ENCODE measurements at regions of chr4 and their contacts with region 1.

Region 1: DNA sequence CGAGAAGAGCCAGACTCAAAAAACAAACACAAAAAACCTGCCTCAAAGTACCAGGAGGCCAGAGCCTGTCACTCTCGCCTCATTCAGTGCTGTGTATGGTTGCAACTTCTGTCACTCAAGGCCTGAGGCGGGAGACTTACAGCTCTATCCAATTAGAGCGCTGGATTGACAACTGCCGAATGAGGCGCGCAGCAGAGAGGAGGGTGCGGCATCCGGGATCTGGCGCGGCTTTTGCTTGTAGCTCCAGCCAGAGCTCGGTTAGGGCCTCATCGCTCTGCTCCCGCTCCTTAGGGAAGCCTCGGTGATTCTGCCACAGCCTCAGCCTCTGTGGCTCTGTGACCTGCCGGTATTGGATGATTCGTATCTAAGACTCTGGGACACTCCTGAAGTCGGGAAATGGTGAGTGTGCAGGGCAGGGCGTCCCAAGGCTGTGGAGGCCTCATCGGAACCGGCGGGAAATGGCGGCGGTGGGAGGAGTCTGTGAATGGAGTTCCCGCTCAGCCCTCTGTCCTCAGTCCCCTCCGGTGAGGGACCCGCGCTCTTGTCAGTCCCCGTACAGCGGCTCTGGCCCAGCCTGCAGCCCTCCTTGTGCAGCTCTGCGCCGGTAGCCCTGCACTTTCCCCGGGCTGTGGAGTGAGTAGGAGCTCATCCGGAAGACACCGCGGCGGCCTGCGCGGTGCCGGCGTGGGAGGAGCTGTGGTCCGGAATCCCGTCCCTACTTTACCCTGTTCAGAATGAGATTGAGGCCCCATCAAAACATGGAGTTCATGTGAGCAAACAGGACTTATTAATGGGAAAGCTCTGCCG is at the start of gene ZNF718:
- DNase-seq: peak; percentile 94
- ATAC-seq: peak; percentile 98
- H3K4me3 Mint-ChIP-seq: peak within 1 kb of the TSS; percentile 95
- H3K27ac Mint-ChIP-seq: peak within 1 kb of the TSS; percentile 97
- H3K4me1 Mint-ChIP-seq: peaks cover 38% of the 10 kb centered on the region
- H3K27me3 Mint-ChIP-seq: no peaks in the 10 kb centered on the region
- total RNA-seq, gene ZNF718: 11.5 to 12.4 TPM

Region 2: GRCh38 chr4:85951-86350 is 38.5 kb before region 1 on chr4:
- CTCF ChIA-PET with region 1: no interaction called
- POLR2A ChIA-PET with region 1: no interaction called
- DNase-seq: no peak
- ATAC-seq: no peak
- H3K4me3 Mint-ChIP-seq: no peak overlapping the region
- H3K27ac Mint-ChIP-seq: no peak overlapping the region
- H3K4me1 Mint-ChIP-seq: no peaks in the 10 kb centered on the region
- H3K27me3 Mint-ChIP-seq: no peaks in the 10 kb centered on the region

Region 3: DNA sequence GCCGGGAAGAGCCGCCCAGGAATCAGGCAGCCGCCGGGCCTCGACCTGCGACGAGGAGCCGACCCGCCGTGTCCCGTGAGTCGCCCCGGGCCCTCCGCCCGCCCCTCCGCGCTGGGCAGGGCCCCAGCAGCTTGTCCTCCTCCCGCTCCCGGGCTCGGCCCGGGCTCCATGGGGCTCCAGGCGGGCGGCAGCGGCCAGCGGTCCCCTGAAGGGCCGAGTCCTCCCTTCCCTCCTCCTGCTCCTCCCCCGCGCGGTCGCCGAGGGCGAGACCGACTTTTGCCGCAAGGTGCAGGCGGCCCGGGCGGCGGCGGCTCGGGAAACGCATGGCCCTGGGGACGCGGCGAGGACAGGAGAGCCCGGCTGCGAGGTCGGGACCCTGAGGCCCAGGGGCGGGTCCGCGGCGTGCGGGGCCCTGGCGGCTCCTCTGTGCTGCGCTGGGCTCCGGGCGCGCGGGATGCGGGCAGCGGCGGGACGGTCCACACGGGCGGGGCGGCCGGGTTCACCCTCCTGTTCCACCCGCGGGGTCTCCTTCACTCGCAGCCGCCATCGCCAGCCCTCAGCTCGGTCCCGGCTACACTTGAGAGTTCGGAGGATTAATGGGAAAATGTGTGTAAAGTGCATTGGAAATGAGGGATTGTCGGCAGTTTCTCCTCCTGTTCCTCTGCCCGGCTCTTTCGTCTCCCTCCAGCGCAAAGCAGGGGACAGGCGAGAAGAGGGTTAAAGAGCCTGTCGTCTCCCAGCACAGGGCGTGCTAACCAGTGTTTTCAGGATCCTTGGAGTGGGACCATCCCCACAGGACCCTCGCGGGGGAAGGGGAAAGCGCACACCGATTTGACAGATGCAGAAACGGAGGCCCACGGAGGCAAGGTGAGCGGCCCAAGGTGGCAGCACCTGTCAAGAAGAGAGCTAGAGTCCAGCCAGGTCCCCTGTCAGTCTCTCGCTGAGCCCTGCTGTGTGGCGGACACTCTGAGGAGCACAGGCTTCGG is 16.7 kb before region 1 on chr4:
- CTCF ChIA-PET with region 1: no interaction called
- POLR2A ChIA-PET with region 1: no interaction called
- DNase-seq: no peak
- ATAC-seq: no peak
- H3K4me3 Mint-ChIP-seq: no peak overlapping the region
- H3K27ac Mint-ChIP-seq: no peak overlapping the region
- H3K4me1 Mint-ChIP-seq: peaks cover 1% of the 10 kb centered on the region
- H3K27me3 Mint-ChIP-seq: peaks cover 26% of the 10 kb centered on the region

Region 4: GRCh38 chr4:138935-139334 is 14.5 kb after region 1 on chr4:
- CTCF ChIA-PET with region 1: interaction called, 3 read pairs
- POLR2A ChIA-PET with region 1: interaction called, 14 read pairs
- DNase-seq: no peak
- ATAC-seq: no peak
- H3K4me3 Mint-ChIP-seq: no peak overlapping the region
- H3K27ac Mint-ChIP-seq: no peak overlapping the region
- H3K4me1 Mint-ChIP-seq: peaks cover 3% of the 10 kb centered on the region
- H3K27me3 Mint-ChIP-seq: no peaks in the 10 kb centered on the region

Region 5: DNA sequence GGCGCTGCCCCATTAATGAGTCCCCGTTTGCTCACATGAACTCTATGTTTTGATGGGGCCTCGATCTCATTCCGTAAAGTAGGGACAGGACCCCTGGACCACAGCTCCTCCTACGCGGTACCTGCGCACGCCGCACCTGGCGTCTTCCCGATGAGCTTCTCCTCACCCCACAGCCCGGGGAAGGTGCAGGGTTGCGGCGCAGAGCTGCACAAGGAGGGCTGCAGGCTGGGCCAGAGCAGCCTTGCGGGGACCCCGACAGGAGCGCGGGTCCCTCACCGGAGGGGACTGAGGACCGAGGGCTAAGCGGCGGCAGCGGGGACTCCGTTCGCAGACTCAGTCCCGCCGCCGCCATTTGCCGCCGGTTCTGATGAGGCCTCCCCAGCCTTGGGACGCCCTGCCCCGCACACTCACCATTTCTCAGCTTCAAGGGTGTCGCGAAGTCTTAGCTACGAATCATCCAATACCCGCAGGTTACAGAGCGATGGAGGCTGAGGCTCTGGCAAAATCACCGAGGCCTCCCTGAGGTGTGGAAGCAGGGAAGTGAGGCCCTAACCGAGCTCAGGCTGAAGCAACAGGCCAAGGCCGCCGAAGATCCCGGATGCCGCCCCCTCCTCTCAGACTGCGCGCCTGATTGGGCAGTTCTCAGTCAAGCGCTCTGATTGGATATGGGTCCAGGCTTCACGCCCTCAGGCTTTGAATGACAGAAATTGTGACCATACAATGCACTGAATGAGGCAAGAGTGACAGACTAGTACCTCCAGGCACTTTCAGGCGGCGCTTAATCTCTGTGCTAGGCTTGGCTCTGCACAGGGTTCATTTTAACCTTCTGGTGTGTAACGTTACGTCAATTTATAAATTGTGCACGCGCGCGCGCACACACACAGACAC is 349.3 kb after region 1 on chr4:
- CTCF ChIA-PET with region 1: no interaction called
- POLR2A ChIA-PET with region 1: interaction called, 15 read pairs
- DNase-seq: peak; percentile 96
- ATAC-seq: peak; percentile 100
- H3K4me3 Mint-ChIP-seq: peak overlapping the region; percentile 99
- H3K27ac Mint-ChIP-seq: peak overlapping the region; percentile 100
- H3K4me1 Mint-ChIP-seq: peaks cover 34% of the 10 kb centered on the region
- H3K27me3 Mint-ChIP-seq: no peaks in the 10 kb centered on the region

Region 6: GRCh38 chr4:532588-533317 is 408.3 kb after region 1 on chr4:
- CTCF ChIA-PET with region 1: no interaction called
- POLR2A ChIA-PET with region 1: no interaction called
- DNase-seq: no peak
- ATAC-seq: no peak
- H3K4me3 Mint-ChIP-seq: no peak overlapping the region
- H3K27ac Mint-ChIP-seq: no peak overlapping the region
- H3K4me1 Mint-ChIP-seq: no peaks in the 10 kb centered on the region
- H3K27me3 Mint-ChIP-seq: no peaks in the 10 kb centered on the region